Calu3 (cell line): ENCODE measurements at regions of chr15 and their contacts with region 1.

Region 1: DNA sequence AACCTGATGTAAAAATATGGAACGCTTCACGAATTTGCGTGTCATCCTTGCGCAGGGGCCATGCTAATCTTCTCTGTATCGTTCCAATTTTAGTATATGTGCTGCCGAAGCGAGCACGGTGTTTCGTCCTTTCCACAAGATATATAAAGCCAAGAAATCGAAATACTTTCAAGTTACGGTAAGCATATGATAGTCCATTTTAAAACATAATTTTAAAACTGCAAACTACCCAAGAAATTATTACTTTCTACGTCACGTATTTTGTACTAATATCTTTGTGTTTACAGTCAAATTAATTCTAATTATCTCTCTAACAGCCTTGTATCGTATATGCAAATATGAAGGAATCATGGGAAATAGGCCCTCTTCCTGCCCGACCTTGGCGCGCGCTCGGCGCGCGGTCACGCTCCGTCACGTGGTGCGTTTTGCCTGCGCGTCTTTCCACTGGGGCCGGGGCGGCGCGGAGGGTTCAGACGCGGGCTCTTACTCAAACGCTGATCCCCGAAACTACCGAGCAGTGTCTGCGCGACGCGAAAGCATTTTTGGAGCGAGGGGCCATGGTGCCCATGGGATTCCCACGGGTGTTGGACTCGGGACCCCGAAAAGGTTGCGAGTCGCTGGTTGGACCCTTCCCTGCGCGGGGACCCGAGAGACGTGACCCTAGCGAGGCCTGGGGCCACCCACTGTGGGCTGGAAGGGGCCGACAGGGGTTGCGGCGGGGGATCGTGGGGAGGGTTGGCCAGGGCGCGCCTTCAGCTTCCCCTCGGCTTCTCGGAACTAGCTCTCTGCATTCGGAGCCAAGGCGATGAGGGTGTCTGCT is at the start of gene RNU6-1:
- DNase-seq: peak; percentile 92
- H3K4me3 Mint-ChIP-seq: peak within 1 kb of the TSS; percentile 79
- H3K27ac Mint-ChIP-seq: peak within 1 kb of the TSS; percentile 99
- H3K4me1 Mint-ChIP-seq: peaks cover 15% of the 10 kb centered on the region
- H3K27me3 Mint-ChIP-seq: peaks cover 30% of the 10 kb centered on the region
- CTCF ChIP-seq: no peak
- total RNA-seq, gene RNU6-1: not detected in 2 replicates

Region 2: GRCh38 chr15:67048281-67049279 is 791.6 kb before region 1 on chr15:
- CTCF ChIA-PET with region 1: no interaction called
- intact Hi-C with region 1: loop called (anchors 5 kb)
- DNase-seq: peak; percentile 85
- H3K4me3 Mint-ChIP-seq: peak overlapping the region; percentile 65
- H3K27ac Mint-ChIP-seq: peak overlapping the region; percentile 86
- H3K4me1 Mint-ChIP-seq: peaks cover 53% of the 10 kb centered on the region
- H3K27me3 Mint-ChIP-seq: no peaks in the 10 kb centered on the region
- CTCF ChIP-seq: no peak

Region 3: DNA sequence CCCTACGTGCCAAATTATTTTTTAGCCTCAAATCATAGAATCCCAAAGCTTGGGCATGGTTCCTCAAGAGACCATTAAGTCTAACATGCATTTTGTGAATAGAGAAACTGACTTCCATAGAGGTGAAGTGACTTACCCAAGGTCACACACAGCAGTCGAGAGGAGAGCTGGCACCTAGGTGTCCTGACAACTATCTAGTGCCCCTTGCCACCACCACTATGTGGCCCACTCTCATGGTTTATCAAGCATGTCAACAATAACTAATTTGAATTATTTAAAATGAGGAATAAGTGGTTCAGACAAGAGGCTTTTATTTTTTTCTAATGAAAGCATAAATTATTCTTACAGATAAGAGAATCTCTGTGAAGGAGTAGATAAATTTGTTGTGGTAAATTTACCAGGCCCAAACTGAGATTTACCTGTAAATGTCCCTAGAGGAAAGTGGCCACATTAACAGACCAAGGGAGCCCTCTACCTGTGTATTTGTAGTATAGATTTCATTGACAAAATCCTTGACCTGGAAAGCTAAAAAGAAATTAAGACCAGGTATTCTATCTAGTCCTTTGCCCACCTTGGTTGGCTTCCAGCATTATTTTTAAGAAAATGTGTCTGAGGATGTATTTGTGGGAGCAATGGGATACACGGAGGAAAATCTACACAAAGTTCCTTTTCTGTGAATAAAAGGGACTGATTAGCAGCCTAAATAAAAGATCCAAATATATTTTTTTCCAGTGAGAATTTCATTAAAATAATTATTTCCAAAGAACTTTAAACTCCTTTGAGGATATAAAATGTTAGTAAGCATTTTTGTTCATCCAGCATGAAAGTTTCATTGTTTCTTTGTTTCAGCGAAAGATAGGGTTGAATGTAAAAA is 536.4 kb before region 1 on chr15:
- CTCF ChIA-PET with region 1: no interaction called
- intact Hi-C with region 1: loop called (anchors 10 kb)
- DNase-seq: peak; percentile 38
- H3K4me3 Mint-ChIP-seq: no peak overlapping the region
- H3K27ac Mint-ChIP-seq: no peak overlapping the region
- H3K4me1 Mint-ChIP-seq: no peaks in the 10 kb centered on the region
- H3K27me3 Mint-ChIP-seq: no peaks in the 10 kb centered on the region
- CTCF ChIP-seq: peak; percentile 53

Region 4: GRCh38 chr15:67383899-67384298 is 456.2 kb before region 1 on chr15:
- CTCF ChIA-PET with region 1: no interaction called
- intact Hi-C with region 1: loop called (anchors 10 kb)
- DNase-seq: no peak
- H3K4me3 Mint-ChIP-seq: no peak overlapping the region
- H3K27ac Mint-ChIP-seq: no peak overlapping the region
- H3K4me1 Mint-ChIP-seq: no peaks in the 10 kb centered on the region
- H3K27me3 Mint-ChIP-seq: no peaks in the 10 kb centered on the region
- CTCF ChIP-seq: no peak

Region 5: DNA sequence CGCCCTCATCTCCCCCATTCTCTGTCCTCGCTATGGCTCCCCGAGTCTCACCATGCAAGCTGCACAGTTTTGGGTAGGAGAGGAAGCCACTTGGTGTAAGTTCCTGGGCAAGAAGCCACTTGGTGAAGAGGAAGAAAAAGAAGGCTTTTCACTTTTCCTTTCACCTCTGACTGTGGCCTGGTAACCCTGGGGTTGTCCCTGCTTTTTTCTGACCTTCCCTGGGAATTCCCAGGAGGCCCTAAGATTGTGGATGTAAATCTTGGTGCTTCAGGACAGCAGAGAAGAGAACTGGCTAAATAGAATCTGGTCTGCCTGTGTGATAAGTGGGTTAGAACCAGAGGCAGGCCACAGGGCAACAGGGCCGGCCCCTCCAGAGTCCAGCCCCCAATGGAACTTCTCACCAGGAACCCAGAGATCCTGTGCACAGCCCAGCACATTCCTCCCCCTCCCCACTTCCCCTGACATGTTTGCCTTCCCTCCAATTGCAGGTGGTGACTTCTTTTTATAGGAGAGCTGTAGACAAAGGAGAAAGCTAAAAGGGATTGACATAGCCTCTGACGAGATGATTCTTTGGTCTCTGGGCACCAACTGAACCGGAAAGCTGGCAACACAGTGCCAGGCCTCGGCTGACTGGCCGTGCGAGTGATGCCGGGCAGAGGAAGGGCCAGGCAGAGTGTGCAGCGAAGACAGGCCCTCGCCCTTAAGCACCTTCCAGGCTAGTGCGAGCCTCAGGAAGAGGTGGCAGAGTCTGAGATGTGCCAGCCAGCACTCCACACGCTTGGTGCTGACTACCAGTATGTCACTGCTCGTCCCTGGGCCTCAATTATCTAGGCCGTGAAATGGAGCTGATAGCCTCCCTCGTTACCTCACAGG is 34.2 kb before region 1 on chr15:
- CTCF ChIA-PET with region 1: interaction called, 12 read pairs
- intact Hi-C with region 1: no loop called
- DNase-seq: no peak
- H3K4me3 Mint-ChIP-seq: no peak overlapping the region
- H3K27ac Mint-ChIP-seq: no peak overlapping the region
- H3K4me1 Mint-ChIP-seq: no peaks in the 10 kb centered on the region
- H3K27me3 Mint-ChIP-seq: no peaks in the 10 kb centered on the region
- CTCF ChIP-seq: no peak

Region 6: GRCh38 chr15:68484696-68485400 is 644.7 kb after region 1 on chr15:
- CTCF ChIA-PET with region 1: no interaction called
- intact Hi-C with region 1: no loop called
- DNase-seq: no peak
- H3K4me3 Mint-ChIP-seq: no peak overlapping the region
- H3K27ac Mint-ChIP-seq: no peak overlapping the region
- H3K4me1 Mint-ChIP-seq: no peaks in the 10 kb centered on the region
- H3K27me3 Mint-ChIP-seq: peaks cover 97% of the 10 kb centered on the region
- CTCF ChIP-seq: no peak